Panc1 (cell line): ENCODE measurements at regions of chr6 and their contacts with region 1.

Region 1: DNA sequence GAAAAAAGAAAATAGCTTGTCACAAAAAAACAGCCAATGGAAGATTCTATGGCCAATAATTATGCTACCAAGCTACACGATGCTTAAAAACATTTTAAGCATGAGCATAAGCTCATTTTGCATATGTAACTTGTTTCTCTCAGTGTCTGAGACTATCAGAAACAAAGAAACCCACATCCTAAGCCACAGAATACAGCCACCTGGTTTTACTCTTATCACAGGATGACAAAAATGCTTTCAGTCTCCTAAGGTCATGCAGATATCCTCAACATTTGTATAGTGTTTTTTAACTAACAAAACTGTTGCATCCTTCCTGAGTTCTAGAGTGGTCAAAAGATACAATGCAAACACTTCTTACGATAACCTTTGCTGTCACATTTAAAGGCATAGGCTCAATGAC is 172.1 kb upstream of the RUNX2 start:
- DNase-seq: no peak
- ATAC-seq: no peak
- H3K4me3 ChIP-seq: no peak overlapping the region
- H3K27ac ChIP-seq: no peak overlapping the region
- H3K4me1 ChIP-seq: no peaks in the 10 kb centered on the region
- H3K27me3 ChIP-seq: no peaks in the 10 kb centered on the region
- CTCF ChIP-seq: no peak

Region 2: DNA sequence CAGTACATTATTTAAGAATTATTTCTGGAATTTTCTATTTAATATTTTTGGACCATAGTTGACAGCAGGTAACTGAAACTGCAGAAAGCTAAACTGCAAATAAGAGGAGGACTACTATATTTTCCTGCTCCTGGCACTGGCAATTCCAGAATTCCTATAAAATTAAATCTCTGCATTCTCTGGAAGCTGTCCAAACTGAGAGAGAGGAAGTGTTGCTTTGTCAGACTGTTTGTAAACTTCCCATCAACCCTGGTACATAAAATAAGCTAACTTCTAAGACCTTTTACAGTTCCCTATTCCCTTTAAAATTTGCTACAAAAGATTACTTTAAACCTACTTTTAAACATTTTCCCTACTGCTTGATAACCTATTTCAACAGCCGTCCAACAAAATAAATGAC is 24.0 kb before region 1 on chr6:
- CTCF ChIA-PET with region 1: no interaction called
- POLR2A ChIA-PET with region 1: interaction called, 16 read pairs
- in situ Hi-C with region 1: no loop called
- intact Hi-C with region 1: no loop called
- DNase-seq: no peak
- ATAC-seq: no peak
- H3K4me3 ChIP-seq: no peak overlapping the region
- H3K27ac ChIP-seq: no peak overlapping the region
- H3K4me1 ChIP-seq: no peaks in the 10 kb centered on the region
- H3K27me3 ChIP-seq: no peaks in the 10 kb centered on the region
- CTCF ChIP-seq: no peak

Region 3: DNA sequence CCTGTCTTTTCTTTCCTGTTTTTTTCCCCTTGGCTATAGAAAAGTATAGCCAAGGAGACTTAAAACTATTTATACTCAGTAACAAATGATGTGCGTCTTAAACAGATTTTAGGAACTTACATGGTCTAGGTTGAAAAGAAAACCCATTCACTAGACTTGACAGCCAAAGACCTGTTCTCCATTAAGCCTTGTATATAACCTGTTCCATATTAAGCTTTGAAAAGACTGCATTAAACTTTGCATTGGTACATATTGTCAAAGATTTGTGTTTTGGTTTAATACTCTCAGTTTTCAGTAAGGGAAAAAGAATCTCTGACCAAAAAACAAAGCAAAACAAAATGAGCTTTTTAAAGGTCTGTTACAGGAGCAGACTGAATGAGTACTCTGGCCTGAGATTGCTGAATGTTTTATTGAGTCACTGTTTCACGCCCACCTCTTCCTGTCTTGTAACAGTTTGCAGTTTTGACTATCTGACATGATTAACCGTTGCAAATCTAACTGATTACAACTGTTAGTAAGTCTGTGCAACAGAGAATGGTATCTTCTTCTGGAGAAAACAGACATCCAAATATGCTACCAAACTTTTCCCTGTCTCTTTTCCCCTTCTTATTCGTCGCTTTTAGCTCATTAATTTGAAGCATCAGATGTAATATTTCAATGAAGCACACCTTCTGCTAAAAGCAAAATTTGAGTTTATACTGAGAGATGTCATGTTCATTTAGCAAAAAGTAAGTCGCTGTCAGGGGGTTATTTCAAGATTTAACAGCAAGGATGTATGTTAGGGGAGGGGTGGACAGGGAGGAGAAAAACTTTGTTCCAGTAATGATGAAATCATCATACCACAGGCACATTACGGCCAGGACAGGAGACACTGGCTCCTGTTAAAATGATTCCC is 280.7 kb after region 1 on chr6:
- CTCF ChIA-PET with region 1: no interaction called
- POLR2A ChIA-PET with region 1: no interaction called
- in situ Hi-C with region 1: no loop called
- intact Hi-C with region 1: no loop called
- DNase-seq: no peak
- ATAC-seq: no peak
- H3K4me3 ChIP-seq: no peak overlapping the region
- H3K27ac ChIP-seq: peak overlapping the region; percentile 67
- H3K4me1 ChIP-seq: peaks cover 15% of the 10 kb centered on the region
- H3K27me3 ChIP-seq: no peaks in the 10 kb centered on the region
- CTCF ChIP-seq: no peak